Right ventricle myocardium superior (tissue), 1 donor: ENCODE measurements at regions of chr2 and their contacts with region 1.

Region 1: GRCh38 chr2:60998628-60999545 is 18.6 kb upstream of the PEX13 start:
- DNase-seq: no peak
- ATAC-seq: no peak

Region 2: GRCh38 chr2:60707750-60708371 is 291.0 kb before region 1 on chr2:
- intact Hi-C with region 1: loop called (anchors 5 kb)
- DNase-seq: no peak
- ATAC-seq: peak; percentile 70

Region 3: GRCh38 chr2:60794277-60794863 is 204.5 kb before region 1 on chr2:
- intact Hi-C with region 1: loop called (anchors 10 kb)
- DNase-seq: no peak
- ATAC-seq: no peak

Region 4: GRCh38 chr2:62475172-62476011 is 1476.5 kb after region 1 on chr2:
- intact Hi-C with region 1: no loop called
- DNase-seq: peak; percentile 53
- ATAC-seq: peak; percentile 16